Gastrocnemius medialis (tissue), 4 donors: ENCODE measurements at regions of chr11 and their contacts with region 1.

Region 1: GRCh38 chr11:114762408-114762807 is 84.1 kb downstream of the NXPE2 start:
- DNase-seq: peak; percentile 45 to 61
- ATAC-seq: peak; percentile 74 to 87
- H3K4me3 ChIP-seq: no peak overlapping the region
- H3K27ac ChIP-seq: no peak overlapping the region
- H3K4me1 ChIP-seq: no peaks in the 10 kb centered on the region
- H3K27me3 ChIP-seq: no peaks in the 10 kb centered on the region
- CTCF ChIP-seq: peak; percentile 58 to 78 (median 74)
- POLR2A ChIP-seq: no peak

Region 2: GRCh38 chr11:114340311-114341131 is 421.9 kb before region 1 on chr11:
- in situ Hi-C with region 1: loop called (anchors 10 to 25 kb)
- intact Hi-C with region 1: loop called (anchors 2 kb)
- DNase-seq: peak in 1 of 2 donors; percentile 47
- ATAC-seq: peak; percentile 70 to 88
- H3K4me3 ChIP-seq: peak overlapping the region in 3 of 4 donors; percentile 18 to 37 (median 34)
- H3K27ac ChIP-seq: peak overlapping the region in 3 of 4 donors; percentile 2 to 29 (median 14)
- H3K4me1 ChIP-seq: peaks cover 7 to 8% of the 10 kb centered on the region in 2 donors
- H3K27me3 ChIP-seq: no peaks in the 10 kb centered on the region
- CTCF ChIP-seq: peak; percentile 61 to 82 (median 79)
- POLR2A ChIP-seq: no peak

Region 3: GRCh38 chr11:114738954-114739353 is 23.5 kb before region 1 on chr11:
- in situ Hi-C with region 1: no loop called
- intact Hi-C with region 1: loop called (anchors 1 kb)
- DNase-seq: peak in 1 of 2 donors; percentile 21
- ATAC-seq: peak; percentile 68 to 69
- H3K4me3 ChIP-seq: no peak overlapping the region
- H3K27ac ChIP-seq: no peak overlapping the region
- H3K4me1 ChIP-seq: no peaks in the 10 kb centered on the region
- H3K27me3 ChIP-seq: no peaks in the 10 kb centered on the region
- CTCF ChIP-seq: peak; percentile 70 to 84 (median 78)
- POLR2A ChIP-seq: no peak

Region 4: GRCh38 chr11:114787126-114787525 is 24.7 kb after region 1 on chr11:
- in situ Hi-C with region 1: no loop called
- intact Hi-C with region 1: no loop called
- DNase-seq: no peak
- ATAC-seq: no peak
- H3K4me3 ChIP-seq: no peak overlapping the region
- H3K27ac ChIP-seq: no peak overlapping the region
- H3K4me1 ChIP-seq: peaks cover 0 to 7% of the 10 kb centered on the region in 2 donors
- H3K27me3 ChIP-seq: no peaks in the 10 kb centered on the region
- CTCF ChIP-seq: no peak
- POLR2A ChIP-seq: no peak